ENCODE measurements at regions of chr6 and their contacts with region 1.

Region 1: DNA sequence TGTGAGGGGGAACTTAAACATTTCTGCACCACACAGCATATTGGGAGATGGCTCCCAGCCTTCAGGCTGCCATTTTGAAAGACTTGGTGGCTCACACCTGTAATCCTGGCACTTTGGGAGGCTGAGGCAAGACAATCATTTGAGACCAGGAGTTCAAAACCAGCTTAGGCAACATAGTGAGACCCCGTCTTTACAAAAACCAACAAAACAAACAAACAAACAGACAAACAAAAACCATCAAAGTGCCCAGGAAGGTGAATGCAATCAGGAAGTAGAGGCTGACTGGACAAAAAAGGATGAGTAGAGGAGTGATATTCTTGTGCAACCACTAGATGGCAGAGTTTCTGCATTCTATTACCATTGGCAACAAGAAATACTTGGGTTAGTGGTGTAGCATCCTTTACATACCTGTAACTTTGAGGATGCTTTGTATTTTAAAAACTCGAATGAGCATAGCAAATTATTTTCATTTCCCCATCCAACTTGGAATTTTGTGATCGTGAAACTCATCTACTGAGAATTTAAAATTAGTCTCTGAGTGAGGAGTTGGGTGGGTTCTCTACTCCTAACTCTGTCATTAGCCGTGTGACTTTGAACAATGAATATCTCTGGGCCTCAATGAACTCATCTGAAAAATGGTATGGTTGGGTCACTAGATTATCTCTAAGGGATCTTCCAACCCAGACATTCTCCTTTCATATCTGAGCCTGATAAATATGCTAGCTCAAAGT is 84.4 kb downstream of the CRYBG1 start:
- DNase-seq: peak; percentile 59
- ATAC-seq: peak; percentile 63
- H3K4me3 Mint-ChIP-seq: no peak overlapping the region
- H3K27ac Mint-ChIP-seq: no peak overlapping the region
- H3K4me1 Mint-ChIP-seq: peaks cover 17% of the 10 kb centered on the region
- H3K27me3 Mint-ChIP-seq: peaks cover 29% of the 10 kb centered on the region

Region 2: DNA sequence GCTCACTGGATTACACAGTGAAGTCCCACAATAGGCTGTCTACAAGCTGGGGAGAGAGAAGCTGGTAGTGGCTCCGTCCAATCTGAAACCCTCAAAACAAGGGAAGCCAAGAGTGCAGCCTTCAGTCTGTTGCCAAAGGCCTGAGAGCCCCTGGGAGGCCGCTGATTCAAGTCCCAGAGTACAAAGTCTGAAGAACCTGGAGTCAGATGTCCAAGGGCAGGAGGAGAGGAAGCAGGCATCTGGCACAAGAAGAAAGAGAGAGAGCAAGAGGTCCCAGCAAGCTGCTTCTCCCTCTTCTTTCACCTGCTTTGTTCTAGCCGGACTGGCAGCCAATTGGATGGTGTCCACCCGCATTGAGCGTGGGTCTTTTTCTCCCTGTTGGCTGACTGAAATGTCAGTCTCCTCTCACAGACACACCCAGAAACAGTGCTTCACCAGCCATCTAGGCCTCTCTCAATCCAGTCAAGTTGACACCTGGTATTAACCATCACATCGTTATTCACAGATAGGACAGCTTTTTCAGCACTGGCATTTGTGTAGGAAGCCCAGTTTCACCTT is 33.2 kb before region 1 on chr6:
- CTCF ChIA-PET with region 1: no interaction called
- POLR2A ChIA-PET with region 1: no interaction called
- DNase-seq: no peak
- ATAC-seq: no peak
- H3K4me3 Mint-ChIP-seq: no peak overlapping the region
- H3K27ac Mint-ChIP-seq: no peak overlapping the region
- H3K4me1 Mint-ChIP-seq: no peaks in the 10 kb centered on the region
- H3K27me3 Mint-ChIP-seq: peaks cover 58% of the 10 kb centered on the region

Region 3: DNA sequence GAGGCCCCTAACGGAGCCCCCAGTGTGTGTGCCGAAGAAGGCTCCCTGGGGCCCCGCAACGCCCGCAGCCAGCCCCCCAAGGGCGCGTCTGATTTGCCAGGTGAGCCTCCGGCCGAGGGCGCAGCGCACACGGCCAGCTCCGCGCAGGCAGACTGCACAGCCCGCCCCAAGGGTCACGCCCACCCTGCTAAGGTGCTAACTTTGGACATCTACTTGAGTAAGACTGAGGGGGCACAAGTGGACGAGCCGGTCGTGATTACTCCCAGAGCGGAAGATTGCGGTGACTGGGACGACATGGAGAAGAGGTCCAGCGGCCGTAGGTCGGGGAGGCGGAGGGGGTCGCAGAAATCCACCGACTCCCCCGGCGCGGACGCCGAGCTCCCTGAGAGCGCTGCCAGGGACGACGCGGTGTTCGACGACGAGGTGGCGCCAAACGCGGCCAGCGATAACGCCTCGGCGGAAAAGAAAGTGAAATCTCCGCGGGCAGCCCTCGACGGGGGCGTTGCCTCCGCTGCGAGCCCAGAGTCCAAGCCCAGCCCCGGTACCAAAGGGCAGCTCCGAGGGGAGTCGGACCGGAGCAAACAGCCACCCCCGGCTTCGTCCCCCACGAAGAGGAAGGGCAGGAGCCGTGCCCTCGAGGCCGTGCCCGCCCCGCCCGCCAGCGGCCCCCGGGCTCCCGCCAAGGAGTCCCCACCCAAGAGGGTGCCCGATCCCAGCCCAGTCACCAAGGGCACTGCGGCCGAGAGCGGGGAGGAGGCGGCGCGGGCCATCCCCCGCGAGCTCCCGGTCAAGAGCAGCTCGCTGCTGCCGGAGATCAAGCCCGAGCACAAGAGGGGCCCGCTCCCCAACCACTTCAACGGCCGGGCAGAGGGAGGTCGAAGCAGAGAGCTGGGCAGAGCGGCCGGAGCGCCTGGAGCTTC is 67.4 kb after region 1 on chr6:
- CTCF ChIA-PET with region 1: interaction called, 37 read pairs
- POLR2A ChIA-PET with region 1: interaction called, 3 read pairs
- DNase-seq: peak; percentile 89
- ATAC-seq: peak; percentile 72
- H3K4me3 Mint-ChIP-seq: peak overlapping the region; percentile 81
- H3K27ac Mint-ChIP-seq: peak overlapping the region; percentile 95
- H3K4me1 Mint-ChIP-seq: peaks cover 64% of the 10 kb centered on the region
- H3K27me3 Mint-ChIP-seq: peaks cover 2% of the 10 kb centered on the region

Region 4: DNA sequence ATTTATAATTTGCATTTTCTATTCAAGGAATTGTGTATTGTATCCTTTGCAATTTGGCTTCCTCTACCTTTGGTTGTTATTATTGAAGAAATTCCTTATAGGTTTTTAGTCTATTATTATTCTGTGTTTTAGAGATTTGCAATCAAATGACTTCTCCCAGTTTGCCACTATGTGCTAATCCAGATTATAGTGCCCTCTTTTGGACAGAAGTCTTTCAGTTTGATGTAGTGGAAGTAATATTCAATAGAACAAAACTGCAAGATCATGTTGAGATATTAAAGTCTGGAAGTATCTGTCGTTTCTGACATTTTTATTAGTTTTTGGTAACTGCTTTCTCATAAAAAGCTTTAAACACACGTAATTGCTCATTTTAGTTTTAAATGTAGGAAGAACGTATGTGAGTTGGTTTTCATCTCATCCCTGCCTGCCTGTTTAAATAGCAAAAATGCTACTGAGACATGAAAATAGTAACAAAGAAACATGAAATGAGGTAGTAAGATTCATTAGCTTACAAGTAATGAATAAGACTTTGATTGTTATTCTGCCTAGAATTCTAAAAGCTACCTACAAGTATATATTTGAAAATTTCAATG is 111.5 kb after region 1 on chr6:
- CTCF ChIA-PET with region 1: interaction called, 14 read pairs
- POLR2A ChIA-PET with region 1: no interaction called
- DNase-seq: no peak
- ATAC-seq: no peak
- H3K4me3 Mint-ChIP-seq: no peak overlapping the region
- H3K27ac Mint-ChIP-seq: no peak overlapping the region
- H3K4me1 Mint-ChIP-seq: peaks cover 4% of the 10 kb centered on the region
- H3K27me3 Mint-ChIP-seq: no peaks in the 10 kb centered on the region

Region 5: GRCh38 chr6:106568530-106568929 is 123.6 kb after region 1 on chr6:
- CTCF ChIA-PET with region 1: interaction called, 114 read pairs
- POLR2A ChIA-PET with region 1: no interaction called
- DNase-seq: no peak
- ATAC-seq: no peak
- H3K4me3 Mint-ChIP-seq: no peak overlapping the region
- H3K27ac Mint-ChIP-seq: no peak overlapping the region
- H3K4me1 Mint-ChIP-seq: no peaks in the 10 kb centered on the region
- H3K27me3 Mint-ChIP-seq: no peaks in the 10 kb centered on the region

Region 6: GRCh38 chr6:106997390-106998158 is 552.6 kb after region 1 on chr6:
- CTCF ChIA-PET with region 1: interaction called, 12 read pairs
- POLR2A ChIA-PET with region 1: no interaction called
- DNase-seq: peak; percentile 67
- ATAC-seq: peak; percentile 61
- H3K4me3 Mint-ChIP-seq: no peak overlapping the region
- H3K27ac Mint-ChIP-seq: no peak overlapping the region
- H3K4me1 Mint-ChIP-seq: peaks cover 4% of the 10 kb centered on the region
- H3K27me3 Mint-ChIP-seq: no peaks in the 10 kb centered on the region

Region 7: GRCh38 chr6:108235127-108235526 is 1790.2 kb after region 1 on chr6:
- CTCF ChIA-PET with region 1: no interaction called
- POLR2A ChIA-PET with region 1: no interaction called
- DNase-seq: no peak
- ATAC-seq: no peak
- H3K4me3 Mint-ChIP-seq: no peak overlapping the region
- H3K27ac Mint-ChIP-seq: no peak overlapping the region
- H3K4me1 Mint-ChIP-seq: peaks cover 3% of the 10 kb centered on the region
- H3K27me3 Mint-ChIP-seq: no peaks in the 10 kb centered on the region